ENCODE measurements at regions of chr22 and their contacts with region 1.

Region 1: DNA sequence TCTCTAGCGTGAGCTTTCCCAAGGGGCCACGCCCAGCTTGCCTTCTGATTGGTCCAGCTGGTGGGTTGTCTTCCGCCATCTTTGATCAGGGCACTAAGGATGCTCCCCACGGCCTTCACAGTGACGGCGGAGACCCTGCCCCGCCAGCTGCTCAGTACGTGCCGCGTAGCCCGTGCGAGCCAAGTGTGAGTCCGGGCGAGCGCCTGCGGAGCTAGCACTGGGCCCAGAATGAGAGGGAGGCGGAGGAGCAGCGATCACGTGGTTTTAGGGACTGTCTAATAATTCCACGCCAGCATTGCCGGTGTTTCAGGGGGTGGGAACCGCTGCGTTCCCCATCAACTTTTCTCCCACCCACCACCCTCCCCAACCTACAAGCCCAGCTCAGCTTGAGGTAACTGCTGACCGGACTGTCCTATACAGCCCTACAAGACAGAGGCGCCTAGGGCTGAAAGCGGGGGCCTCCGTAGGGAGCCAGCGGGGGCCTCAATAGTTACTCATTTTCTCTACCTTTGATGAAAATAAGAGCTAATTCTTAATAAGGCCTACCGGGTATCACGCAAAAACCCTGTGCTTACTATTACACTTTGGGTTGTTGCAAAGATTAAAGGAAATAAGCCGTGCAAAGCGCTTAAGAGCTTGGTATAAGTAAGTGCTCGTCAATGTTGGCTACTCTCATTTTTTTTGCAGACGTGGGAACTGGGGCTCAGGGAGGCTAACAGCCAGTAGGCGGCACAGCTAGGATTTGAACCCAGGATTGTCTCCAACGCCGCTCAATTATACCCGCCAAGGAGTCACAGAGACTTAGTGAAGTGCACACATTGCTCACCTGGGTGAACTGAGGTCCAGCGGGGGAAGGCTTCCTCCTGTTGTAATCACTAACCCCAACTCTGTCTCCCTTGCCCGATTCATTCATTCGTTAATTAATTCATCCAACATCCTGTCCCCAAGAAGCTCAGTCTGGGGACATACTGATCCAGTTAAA is 1.3 kb upstream of the MTFP1 start:
- DNase-seq: peak; percentile 89
- ATAC-seq: peak; percentile 88
- H3K4me3 Mint-ChIP-seq: peak overlapping the region; percentile 97
- H3K27ac Mint-ChIP-seq: peak overlapping the region; percentile 96
- H3K4me1 Mint-ChIP-seq: peaks cover 47% of the 10 kb centered on the region
- H3K27me3 Mint-ChIP-seq: no peaks in the 10 kb centered on the region
- CTCF ChIP-seq: no peak

Region 2: GRCh38 chr22:29387921-29388758 is 1036.1 kb before region 1 on chr22 and contains the start of gene AP1B1:
- CTCF ChIA-PET with region 1: no interaction called
- POLR2A ChIA-PET with region 1: no interaction called
- intact Hi-C with region 1: loop called (anchors 5 kb)
- DNase-seq: peak; percentile 92
- ATAC-seq: peak; percentile 80
- H3K4me3 Mint-ChIP-seq: peak within 1 kb of the TSS; percentile 93
- H3K27ac Mint-ChIP-seq: peak within 1 kb of the TSS; percentile 93
- H3K4me1 Mint-ChIP-seq: peaks cover 61% of the 10 kb centered on the region
- H3K27me3 Mint-ChIP-seq: no peaks in the 10 kb centered on the region
- CTCF ChIP-seq: no peak
- total RNA-seq, gene AP1B1: 120 and 132 TPM in 2 replicates

Region 3: GRCh38 chr22:29837780-29838598 is 586.3 kb before region 1 on chr22 and contains the start of gene ASCC2:
- CTCF ChIA-PET with region 1: no interaction called
- POLR2A ChIA-PET with region 1: interaction called, 5 read pairs
- intact Hi-C with region 1: loop called (anchors 5 kb)
- DNase-seq: peak; percentile 97
- ATAC-seq: peak; percentile 99
- H3K4me3 Mint-ChIP-seq: peak within 1 kb of the TSS; percentile 97
- H3K27ac Mint-ChIP-seq: peak within 1 kb of the TSS; percentile 96
- H3K4me1 Mint-ChIP-seq: peaks cover 37% of the 10 kb centered on the region
- H3K27me3 Mint-ChIP-seq: no peaks in the 10 kb centered on the region
- CTCF ChIP-seq: no peak
- total RNA-seq, gene ASCC2: 88.1 and 89.7 TPM in 2 replicates

Region 4: GRCh38 chr22:30326706-30327362 is 97.4 kb before region 1 on chr22 and contains the start of gene TBC1D10A:
- CTCF ChIA-PET with region 1: no interaction called
- POLR2A ChIA-PET with region 1: interaction called, 27 read pairs
- intact Hi-C with region 1: loop called (anchors 2 kb)
- DNase-seq: peak; percentile 83
- ATAC-seq: peak; percentile 94
- H3K4me3 Mint-ChIP-seq: peak within 1 kb of the TSS; percentile 86
- H3K27ac Mint-ChIP-seq: peak within 1 kb of the TSS; percentile 82
- H3K4me1 Mint-ChIP-seq: peaks cover 45% of the 10 kb centered on the region
- H3K27me3 Mint-ChIP-seq: no peaks in the 10 kb centered on the region
- CTCF ChIP-seq: no peak
- total RNA-seq, gene TBC1D10A: 20.1 and 20.4 TPM in 2 replicates

Region 5: DNA sequence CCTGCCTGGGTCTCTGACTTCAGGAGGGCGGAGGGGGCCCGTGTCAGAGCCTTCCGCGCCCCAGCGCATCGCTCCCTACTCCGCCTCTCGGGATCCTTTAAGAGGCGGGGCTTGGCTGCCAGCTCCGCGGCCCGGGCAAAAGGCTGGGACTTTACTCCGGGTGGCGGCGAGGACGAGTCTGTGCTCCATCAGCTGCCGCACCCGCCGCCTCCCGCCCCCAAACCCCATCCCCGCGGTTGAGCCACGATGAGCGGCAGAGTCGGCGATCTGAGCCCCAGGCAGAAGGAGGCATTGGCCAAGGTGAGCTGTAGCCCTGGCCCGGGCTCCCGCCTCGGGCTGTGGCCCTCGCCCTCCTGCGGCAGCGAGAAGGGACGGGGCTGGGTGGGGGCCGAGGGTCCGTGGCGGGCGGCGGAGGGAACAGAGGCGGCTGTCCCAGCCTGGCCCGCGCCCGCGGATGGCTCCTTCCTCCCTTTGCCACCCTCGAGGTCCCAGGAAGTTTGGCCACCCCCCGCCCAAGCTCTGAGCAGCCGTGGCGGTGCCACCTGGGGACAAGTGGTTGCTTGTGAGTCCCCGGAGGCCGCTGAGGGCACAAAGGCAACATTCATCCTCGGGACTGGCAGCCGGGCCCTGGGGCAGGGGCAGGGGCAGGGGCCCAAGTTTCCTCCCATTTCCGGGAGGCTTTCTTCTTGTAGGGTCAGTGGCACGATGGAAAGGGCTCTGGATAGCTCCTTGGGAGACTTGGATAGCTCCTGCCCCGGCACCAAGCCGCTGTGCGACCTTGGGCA is 27.2 kb before region 1 on chr22 and contains the start of gene SEC14L2:
- CTCF ChIA-PET with region 1: interaction called, 35 read pairs
- POLR2A ChIA-PET with region 1: interaction called, 42 read pairs
- intact Hi-C with region 1: no loop called
- DNase-seq: peak; percentile 27
- ATAC-seq: peak; percentile 60
- H3K4me3 Mint-ChIP-seq: peak within 1 kb of the TSS; percentile 79
- H3K27ac Mint-ChIP-seq: no peak within 1 kb of the TSS
- H3K4me1 Mint-ChIP-seq: peaks cover 19% of the 10 kb centered on the region
- H3K27me3 Mint-ChIP-seq: peaks cover 34% of the 10 kb centered on the region
- CTCF ChIP-seq: no peak
- total RNA-seq, gene SEC14L2: 0.40 and 0.42 TPM in 2 replicates

Region 6: DNA sequence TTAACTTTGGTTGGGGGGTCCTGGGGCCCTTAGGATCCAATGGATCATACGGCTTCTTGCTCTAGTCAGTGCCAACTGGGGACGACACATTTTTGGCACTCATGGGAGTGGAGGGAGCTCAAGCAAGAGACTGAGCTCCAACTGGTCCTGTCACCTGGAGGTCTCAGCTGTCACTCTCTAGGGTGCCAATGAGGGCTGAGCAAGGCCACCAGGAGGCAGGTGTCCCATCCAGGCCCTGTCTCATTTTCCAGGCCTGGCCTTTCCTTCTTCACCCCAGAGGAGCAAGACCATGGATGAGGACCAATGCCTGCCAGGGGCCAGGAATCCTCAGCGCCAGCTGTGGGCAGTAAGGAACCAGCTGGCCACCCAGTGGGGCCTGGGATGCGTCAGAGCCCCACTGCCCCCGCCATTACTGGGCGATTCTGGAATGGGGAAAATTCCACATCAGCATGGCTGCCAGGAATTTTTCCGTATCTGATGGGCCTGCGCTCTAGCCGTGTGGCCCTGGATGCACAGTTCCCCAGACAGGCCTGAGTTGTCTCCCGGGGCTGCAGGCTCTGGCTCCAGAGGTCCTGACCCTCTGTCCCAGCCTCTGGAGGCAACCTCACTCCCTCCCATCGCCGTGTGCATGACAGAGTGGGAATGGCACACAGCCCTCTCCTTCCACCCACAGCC is 150.9 kb after region 1 on chr22:
- CTCF ChIA-PET with region 1: no interaction called
- POLR2A ChIA-PET with region 1: no interaction called
- intact Hi-C with region 1: no loop called
- DNase-seq: no peak
- ATAC-seq: no peak
- H3K4me3 Mint-ChIP-seq: no peak overlapping the region
- H3K27ac Mint-ChIP-seq: no peak overlapping the region
- H3K4me1 Mint-ChIP-seq: peaks cover 8% of the 10 kb centered on the region
- H3K27me3 Mint-ChIP-seq: no peaks in the 10 kb centered on the region
- CTCF ChIP-seq: no peak

Region 7: DNA sequence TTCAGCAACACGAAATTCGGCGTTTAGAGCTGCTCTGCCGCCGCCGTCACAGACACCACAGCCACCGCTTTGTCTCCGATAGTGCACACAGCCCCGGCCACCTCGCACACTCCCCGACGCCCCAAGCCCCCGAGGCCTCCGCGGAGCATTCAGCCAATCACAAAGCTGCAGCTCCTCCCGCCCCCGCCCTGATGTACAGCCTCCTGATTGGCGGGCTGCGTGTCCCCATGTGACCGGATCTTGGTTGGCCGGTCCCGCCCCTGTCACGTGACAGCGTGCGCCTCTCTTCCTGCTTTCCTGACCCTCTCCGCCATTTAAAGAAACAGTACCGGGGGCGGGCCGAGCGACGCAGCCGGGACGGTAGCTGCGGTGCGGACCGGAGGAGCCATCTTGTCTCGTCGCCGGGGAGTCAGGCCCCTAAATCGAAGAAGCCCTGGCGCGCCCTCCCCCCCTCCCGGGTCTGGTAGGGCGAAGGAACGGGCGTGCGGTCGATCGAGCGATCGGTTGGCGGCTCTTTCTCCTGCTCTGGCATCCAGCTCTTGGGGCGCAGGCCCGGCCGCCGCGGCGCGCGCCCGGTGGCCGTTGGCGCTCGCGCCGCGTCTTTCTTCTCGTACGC is 544.8 kb after region 1 on chr22 and contains the start of gene TUG1:
- CTCF ChIA-PET with region 1: no interaction called
- POLR2A ChIA-PET with region 1: interaction called, 5 read pairs
- intact Hi-C with region 1: loop called (anchors 1 kb)
- DNase-seq: peak; percentile 93
- ATAC-seq: peak; percentile 92
- H3K4me3 Mint-ChIP-seq: peak within 1 kb of the TSS; percentile 95
- H3K27ac Mint-ChIP-seq: peak within 1 kb of the TSS; percentile 94
- H3K4me1 Mint-ChIP-seq: peaks cover 56% of the 10 kb centered on the region
- H3K27me3 Mint-ChIP-seq: no peaks in the 10 kb centered on the region
- CTCF ChIP-seq: no peak
- total RNA-seq, gene TUG1: 70.4 and 83.0 TPM in 2 replicates